CD4-positive, alpha-beta memory T cell (primary cell): ENCODE measurements at regions of chr20 and their contacts with region 1.

Region 1: DNA sequence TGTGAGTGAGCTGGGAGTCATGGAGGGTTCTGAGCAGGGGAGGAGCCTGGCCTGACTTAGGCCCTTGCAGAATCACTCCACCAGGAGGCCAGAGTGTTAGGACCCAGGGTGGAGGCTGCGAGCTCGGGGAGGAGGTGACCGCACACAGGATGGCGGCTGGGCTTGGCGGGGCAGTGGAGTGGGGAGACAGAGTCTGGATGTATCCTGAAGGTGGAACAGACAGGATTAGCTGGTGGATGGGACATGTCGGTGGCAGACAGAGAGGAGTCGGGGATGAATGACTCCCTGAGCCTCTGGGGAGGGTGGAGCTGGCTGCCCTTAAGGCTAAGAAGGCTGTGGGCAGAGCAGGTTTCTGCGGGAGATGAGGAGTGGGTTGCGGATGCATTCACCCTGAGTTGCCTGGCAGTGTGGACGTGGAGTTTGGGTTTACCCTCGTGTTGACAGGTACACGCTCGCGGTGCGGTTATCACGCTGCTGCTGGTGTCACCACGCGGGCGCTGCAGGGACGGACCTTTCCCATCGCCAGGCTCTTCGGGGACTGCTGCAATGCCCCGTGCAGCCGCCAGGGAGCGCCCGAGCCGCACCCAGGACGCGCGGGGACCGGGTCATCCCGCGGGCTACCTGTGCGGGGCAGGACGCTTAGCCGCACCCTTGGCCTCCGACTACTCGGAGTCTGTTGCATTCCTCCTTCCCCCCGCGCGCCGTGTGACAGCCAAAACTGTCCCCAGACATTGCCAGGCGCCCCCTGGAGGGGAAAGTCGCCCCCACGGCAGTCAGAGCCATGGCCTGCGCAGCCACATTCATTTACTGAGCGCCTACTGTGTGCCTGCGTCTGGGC is 43.0 kb upstream of the PTGIS start:
- DNase-seq: peak; percentile 67 to 75 (median 69)
- H3K4me3 ChIP-seq: no peak overlapping the region
- H3K4me3 Mint-ChIP-seq: peak overlapping the region; percentile 29 to 66 (median 48)
- H3K27ac ChIP-seq: no peak overlapping the region
- H3K27ac Mint-ChIP-seq: peak overlapping the region in 2 of 7 donors; percentile 25 to 35
- H3K4me1 ChIP-seq: peaks cover 14% of the 10 kb centered on the region
- H3K4me1 Mint-ChIP-seq: peaks cover 11 to 17% (median 15%) of the 10 kb centered on the region in 4 donors
- H3K27me3 ChIP-seq: no peaks in the 10 kb centered on the region
- H3K27me3 Mint-ChIP-seq: peaks cover 6% of the 10 kb centered on the region in 2 donors

Region 2: DNA sequence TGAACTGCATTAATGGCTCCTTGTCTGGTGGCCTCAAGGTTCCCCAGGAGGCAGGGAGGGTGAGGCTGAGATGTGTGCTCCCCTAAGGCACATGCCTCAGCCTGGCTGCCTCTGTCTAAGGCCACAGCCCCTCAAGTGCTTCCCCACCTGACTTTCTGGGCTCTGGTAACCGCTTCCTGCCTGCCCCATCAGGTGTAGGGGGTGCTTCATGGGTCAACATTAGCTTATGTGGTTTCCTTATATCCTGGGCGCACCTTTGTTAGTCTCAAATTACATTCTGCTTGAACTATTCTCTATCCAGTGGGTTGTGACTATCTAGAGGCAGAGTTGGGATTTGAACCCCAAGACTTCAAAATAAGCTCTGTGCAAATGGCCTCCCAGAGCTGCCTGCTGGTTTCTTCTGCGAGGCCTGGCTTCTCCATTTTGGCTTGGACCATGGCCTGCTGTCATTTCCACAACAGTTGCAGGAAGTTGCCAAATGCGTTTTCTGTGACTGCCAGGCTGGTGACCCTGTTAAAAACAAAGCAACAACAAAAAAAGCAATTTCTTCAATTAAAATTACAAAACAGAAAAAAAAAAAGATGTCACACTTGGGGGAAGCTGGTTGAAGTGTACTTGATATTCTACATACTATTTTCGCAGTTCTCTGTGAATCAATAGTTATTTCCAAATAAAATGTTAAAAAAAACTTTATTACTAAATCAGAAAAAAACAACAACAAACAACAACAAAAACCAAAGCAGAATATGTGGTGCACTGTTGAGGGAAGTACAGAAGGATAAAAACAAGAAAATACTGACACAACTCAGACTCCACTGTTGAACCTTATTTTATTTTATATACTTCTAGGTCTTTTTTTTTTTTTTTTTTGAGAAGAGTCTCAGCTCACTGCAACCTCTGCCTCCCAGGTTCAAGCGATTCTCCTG is 313.1 kb before region 1 on chr20:
- CTCF ChIA-PET with region 1: no interaction called
- POLR2A ChIA-PET with region 1: no interaction called
- intact Hi-C with region 1: no loop called
- DNase-seq: no peak
- H3K4me3 ChIP-seq: no peak overlapping the region
- H3K4me3 Mint-ChIP-seq: peak overlapping the region in 2 of 8 donors; percentile 8 to 15
- H3K27ac ChIP-seq: no peak overlapping the region
- H3K27ac Mint-ChIP-seq: peak overlapping the region; percentile 47 to 87 (median 77)
- H3K4me1 ChIP-seq: peaks cover 11% of the 10 kb centered on the region
- H3K4me1 Mint-ChIP-seq: peaks cover 7 to 22% (median 12%) of the 10 kb centered on the region in 4 donors
- H3K27me3 ChIP-seq: no peaks in the 10 kb centered on the region
- H3K27me3 Mint-ChIP-seq: no peaks in the 10 kb centered on the region

Region 3: GRCh38 chr20:49541733-49542513 is 69.0 kb before region 1 on chr20:
- CTCF ChIA-PET with region 1: interaction called, 86 read pairs
- POLR2A ChIA-PET with region 1: interaction called, 3 read pairs
- intact Hi-C with region 1: loop called (anchors 1 kb)
- DNase-seq: peak; percentile 46 to 53 (median 52)
- H3K4me3 ChIP-seq: no peak overlapping the region
- H3K4me3 Mint-ChIP-seq: no peak overlapping the region
- H3K27ac ChIP-seq: no peak overlapping the region
- H3K27ac Mint-ChIP-seq: peak overlapping the region in 1 of 7 donors; percentile 62
- H3K4me1 ChIP-seq: no peaks in the 10 kb centered on the region
- H3K4me1 Mint-ChIP-seq: peaks cover 0 to 5% (median 1%) of the 10 kb centered on the region in 4 donors
- H3K27me3 ChIP-seq: no peaks in the 10 kb centered on the region
- H3K27me3 Mint-ChIP-seq: peaks cover 2 to 4% of the 10 kb centered on the region in 2 donors

Region 4: DNA sequence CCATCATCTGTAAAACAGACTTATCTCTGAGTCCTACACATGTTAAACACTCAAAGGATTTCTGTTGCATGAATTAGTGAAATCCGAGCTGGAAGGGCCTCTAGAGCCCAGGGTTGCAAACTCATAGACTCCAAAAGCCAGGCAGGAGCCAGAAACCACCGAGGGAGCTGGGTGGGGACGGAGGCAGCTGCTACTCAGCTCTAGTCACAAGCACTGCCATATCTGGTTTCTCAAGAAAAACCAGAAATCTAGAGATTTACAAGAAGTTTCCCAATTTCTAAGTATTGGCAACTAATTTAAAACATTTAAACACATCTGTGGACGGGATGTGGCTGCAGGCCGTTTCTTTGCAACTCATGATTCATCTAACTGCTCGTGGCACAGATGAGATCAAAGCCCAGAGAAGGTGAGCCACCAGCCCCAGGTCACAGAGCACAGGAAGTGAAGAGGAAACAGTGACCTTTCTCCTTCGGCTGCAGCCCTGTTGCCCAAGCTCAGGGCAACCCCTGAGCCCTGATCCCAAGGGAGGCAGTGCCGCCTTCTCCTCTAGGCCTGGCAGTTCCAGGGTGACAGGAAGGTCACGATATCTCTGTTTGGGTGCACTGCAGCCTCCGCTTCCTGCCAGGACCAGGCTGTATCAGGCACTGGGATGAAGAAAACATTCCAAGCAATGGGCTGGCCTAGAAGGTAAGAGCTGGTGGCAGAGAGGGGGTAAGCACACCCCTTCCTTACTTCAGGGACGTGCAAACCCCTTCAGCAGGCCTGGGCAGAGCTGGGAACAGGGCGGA is 16.6 kb before region 1 on chr20:
- CTCF ChIA-PET with region 1: interaction called, 20 read pairs
- POLR2A ChIA-PET with region 1: interaction called, 3 read pairs
- intact Hi-C with region 1: no loop called
- DNase-seq: peak in 1 of 5 donors; percentile 50
- H3K4me3 ChIP-seq: no peak overlapping the region
- H3K4me3 Mint-ChIP-seq: peak overlapping the region; percentile 5 to 74 (median 62)
- H3K27ac ChIP-seq: peak overlapping the region; percentile 17
- H3K27ac Mint-ChIP-seq: peak overlapping the region in 6 of 7 donors; percentile 30 to 83 (median 74)
- H3K4me1 ChIP-seq: peaks cover 40% of the 10 kb centered on the region
- H3K4me1 Mint-ChIP-seq: peaks cover 45 to 69% (median 53%) of the 10 kb centered on the region in 4 donors
- H3K27me3 ChIP-seq: no peaks in the 10 kb centered on the region
- H3K27me3 Mint-ChIP-seq: no peaks in the 10 kb centered on the region

Region 5: GRCh38 chr20:49888345-49888966 is 277.5 kb after region 1 on chr20:
- CTCF ChIA-PET with region 1: interaction called, 19 read pairs
- POLR2A ChIA-PET with region 1: no interaction called
- intact Hi-C with region 1: loop called (anchors 1 kb)
- DNase-seq: peak; percentile 42 to 54 (median 46)
- H3K4me3 ChIP-seq: no peak overlapping the region
- H3K4me3 Mint-ChIP-seq: no peak overlapping the region
- H3K27ac ChIP-seq: no peak overlapping the region
- H3K27ac Mint-ChIP-seq: peak overlapping the region in 6 of 7 donors; percentile 39 to 79 (median 70)
- H3K4me1 ChIP-seq: peaks cover 8% of the 10 kb centered on the region
- H3K4me1 Mint-ChIP-seq: peaks cover 6 to 19% (median 9%) of the 10 kb centered on the region in 4 donors
- H3K27me3 ChIP-seq: no peaks in the 10 kb centered on the region
- H3K27me3 Mint-ChIP-seq: no peaks in the 10 kb centered on the region